ENCODE measurements at regions of chr4 and their contacts with region 1.

Region 1: DNA sequence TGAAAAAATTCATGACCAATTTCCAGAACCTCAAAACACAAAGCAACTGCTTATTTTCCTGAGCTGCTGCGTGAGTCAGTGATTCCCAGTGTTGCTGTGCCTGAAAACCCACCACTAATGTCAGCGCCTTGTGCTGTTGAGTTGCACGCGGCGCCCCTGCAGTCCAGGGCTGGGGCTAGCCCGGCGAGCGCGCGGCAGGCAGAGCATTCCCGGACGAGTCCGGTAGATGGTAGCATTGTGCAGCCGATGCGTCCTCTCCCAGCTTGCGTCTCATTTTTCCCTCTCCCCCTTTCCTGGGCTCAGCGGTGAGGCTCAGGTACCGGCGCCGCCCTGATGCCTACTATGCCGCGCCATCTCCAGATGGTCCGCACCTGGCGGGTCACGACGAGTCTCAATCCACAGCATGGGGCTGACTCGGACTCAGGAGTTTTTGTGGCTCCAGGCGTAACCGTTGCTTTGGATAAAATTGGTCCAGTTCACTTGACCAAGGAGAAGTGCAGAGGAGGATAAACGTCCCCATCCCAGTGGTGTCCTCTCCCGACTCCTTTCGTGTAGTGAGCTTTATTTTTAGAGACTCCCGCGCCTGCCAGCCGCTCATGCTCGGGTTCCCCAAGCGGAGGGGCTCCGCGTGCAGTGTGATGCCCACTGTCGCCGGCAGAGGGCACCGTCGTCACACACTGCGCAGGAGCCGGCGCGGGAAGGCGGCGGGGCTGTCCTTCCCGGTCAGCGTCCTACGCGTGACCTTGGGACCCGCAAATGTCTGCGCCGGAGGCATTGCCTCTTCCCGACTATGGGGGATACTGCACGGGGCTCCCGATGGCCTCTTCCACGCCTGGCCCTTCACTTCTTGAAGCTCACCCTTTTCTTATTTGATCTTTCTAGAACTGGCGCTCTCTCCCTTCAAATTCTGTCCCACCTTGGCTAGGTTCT is 53.6 kb upstream of the IGFBP7 start:
- DNase-seq: peak; percentile 83
- ATAC-seq: peak; percentile 99
- H3K4me3 ChIP-seq: peak overlapping the region; percentile 59
- H3K27ac ChIP-seq: peak overlapping the region; percentile 38
- H3K4me1 ChIP-seq: peaks cover under 1% of the 10 kb centered on the region; the same call in 1 of the 2 replicates
- H3K27me3 ChIP-seq: peaks cover 16% of the 10 kb centered on the region
- CTCF ChIP-seq: peak; percentile 90
- POLR2A ChIP-seq: peak; percentile 54; the same call in 1 of the 2 replicates
- RAD21 ChIP-seq: peak; percentile 89

Region 2: DNA sequence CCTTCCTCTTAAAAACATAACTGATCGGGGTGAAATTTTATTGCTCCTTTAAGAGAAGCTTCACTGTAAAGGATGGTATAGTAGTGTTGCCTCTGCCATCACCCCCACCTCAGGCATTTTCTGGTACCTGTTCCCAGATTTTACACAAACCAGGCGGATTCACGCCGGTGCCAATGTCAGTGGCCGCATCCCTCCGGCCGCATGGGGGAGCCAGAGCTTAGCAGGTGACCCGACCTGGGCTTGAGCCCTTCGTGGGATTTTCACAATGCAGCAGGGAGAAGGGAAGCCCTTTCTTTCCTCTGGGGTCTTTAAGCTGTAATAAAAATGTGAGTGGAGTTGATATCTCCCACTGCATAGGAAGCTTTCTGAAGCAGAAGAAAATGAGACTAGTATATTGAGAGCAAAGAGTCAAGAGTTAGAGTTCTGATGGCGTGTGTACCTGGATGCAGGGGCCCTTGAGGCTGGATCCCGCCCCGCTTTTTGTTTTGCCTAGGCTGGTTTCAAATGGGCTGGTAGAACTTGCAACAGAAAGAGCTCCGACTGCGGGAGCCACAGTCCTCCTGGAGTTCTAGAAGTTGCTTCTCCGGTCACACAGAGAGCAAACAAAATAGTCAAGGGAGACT is 125.7 kb before region 1 on chr4:
- CTCF ChIA-PET with region 1: interaction called, 9 read pairs
- POLR2A ChIA-PET with region 1: no interaction called
- dilution Hi-C with region 1: no loop called
- in situ Hi-C with region 1: no loop called
- intact Hi-C with region 1: loop called (anchors 1 kb)
- DNase-seq: peak; percentile 55
- ATAC-seq: peak; percentile 73
- H3K4me3 ChIP-seq: no peak overlapping the region
- H3K27ac ChIP-seq: no peak overlapping the region
- H3K4me1 ChIP-seq: peaks cover 8% of the 10 kb centered on the region
- H3K27me3 ChIP-seq: no peaks in the 10 kb centered on the region
- CTCF ChIP-seq: peak; percentile 86
- POLR2A ChIP-seq: peak; percentile 22; the same call in 1 of the 2 replicates
- RAD21 ChIP-seq: peak; percentile 94

Region 3: GRCh38 chr4:57043347-57044251 is 120.2 kb before region 1 on chr4:
- CTCF ChIA-PET with region 1: interaction called, 10 read pairs
- POLR2A ChIA-PET with region 1: no interaction called
- dilution Hi-C with region 1: no loop called
- in situ Hi-C with region 1: no loop called
- intact Hi-C with region 1: loop called (anchors 1 kb)
- DNase-seq: peak; percentile 54
- ATAC-seq: peak; percentile 53
- H3K4me3 ChIP-seq: no peak overlapping the region
- H3K27ac ChIP-seq: peak overlapping the region; percentile 90
- H3K4me1 ChIP-seq: peaks cover 23% of the 10 kb centered on the region
- H3K27me3 ChIP-seq: no peaks in the 10 kb centered on the region
- CTCF ChIP-seq: no peak
- POLR2A ChIP-seq: no peak
- RAD21 ChIP-seq: no peak

Region 4: DNA sequence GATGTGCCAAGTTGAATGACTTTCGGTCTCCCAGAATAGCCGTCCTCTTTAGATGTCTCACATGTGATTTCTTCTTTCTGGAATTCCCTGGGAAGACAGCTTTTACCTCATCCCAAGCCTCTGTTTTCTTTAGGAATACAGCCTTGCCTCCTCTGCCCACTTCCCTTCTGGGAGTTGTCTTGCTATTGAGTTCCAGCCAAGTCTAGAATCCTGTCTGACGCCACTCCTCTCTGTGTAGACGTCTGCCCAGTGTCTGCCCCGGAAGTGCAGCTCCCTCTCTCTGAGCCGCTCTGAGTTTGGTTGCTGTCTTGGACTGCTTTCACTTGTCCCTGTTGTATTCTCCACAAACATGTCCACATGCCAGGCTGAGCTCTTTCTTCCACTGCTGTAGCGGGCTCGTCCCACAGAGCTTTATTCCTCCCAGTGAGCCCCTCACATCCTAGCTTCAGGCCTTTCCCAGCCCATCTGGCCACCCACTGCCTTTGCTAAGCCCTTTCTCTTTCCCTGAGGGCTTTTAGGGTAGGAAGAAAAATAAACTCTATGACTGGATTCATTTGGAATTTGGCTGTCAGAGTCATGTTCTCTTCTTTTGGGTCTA is 44.6 kb before region 1 on chr4:
- CTCF ChIA-PET with region 1: interaction called, 11 read pairs
- POLR2A ChIA-PET with region 1: no interaction called
- dilution Hi-C with region 1: no loop called
- in situ Hi-C with region 1: no loop called
- intact Hi-C with region 1: loop called (anchors 2 kb)
- DNase-seq: peak; percentile 96
- ATAC-seq: peak; percentile 92
- H3K4me3 ChIP-seq: peak overlapping the region; percentile 33; the same call in 1 of the 2 replicates
- H3K27ac ChIP-seq: peak overlapping the region; percentile 78
- H3K4me1 ChIP-seq: peaks cover 11% of the 10 kb centered on the region
- H3K27me3 ChIP-seq: no peaks in the 10 kb centered on the region
- CTCF ChIP-seq: no peak
- POLR2A ChIP-seq: peak; percentile 79
- RAD21 ChIP-seq: no peak; the same call in 1 of the 2 replicates

Region 5: GRCh38 chr4:57147335-57148060 is 16.3 kb before region 1 on chr4:
- CTCF ChIA-PET with region 1: interaction called, 22 read pairs
- POLR2A ChIA-PET with region 1: interaction called, 3 read pairs
- dilution Hi-C with region 1: no loop called
- in situ Hi-C with region 1: no loop called
- intact Hi-C with region 1: no loop called
- DNase-seq: peak; percentile 75
- ATAC-seq: peak; percentile 37; the same call in 1 of the 2 replicates
- H3K4me3 ChIP-seq: no peak overlapping the region
- H3K27ac ChIP-seq: no peak overlapping the region
- H3K4me1 ChIP-seq: peaks cover 7% of the 10 kb centered on the region; the same call in 1 of the 2 replicates
- H3K27me3 ChIP-seq: no peaks in the 10 kb centered on the region
- CTCF ChIP-seq: no peak
- POLR2A ChIP-seq: no peak
- RAD21 ChIP-seq: no peak

Region 6: GRCh38 chr4:57426779-57427395 is 263.1 kb after region 1 on chr4:
- CTCF ChIA-PET with region 1: interaction called, 4 read pairs
- POLR2A ChIA-PET with region 1: no interaction called
- dilution Hi-C with region 1: no loop called
- in situ Hi-C with region 1: no loop called
- intact Hi-C with region 1: loop called (anchors 10 kb)
- DNase-seq: peak; percentile 66
- ATAC-seq: peak; percentile 77
- H3K4me3 ChIP-seq: no peak overlapping the region
- H3K27ac ChIP-seq: no peak overlapping the region
- H3K4me1 ChIP-seq: no peaks in the 10 kb centered on the region
- H3K27me3 ChIP-seq: no peaks in the 10 kb centered on the region
- CTCF ChIP-seq: peak; percentile 68
- POLR2A ChIP-seq: no peak
- RAD21 ChIP-seq: peak; percentile 67

Region 7: GRCh38 chr4:57661517-57662090 is 497.8 kb after region 1 on chr4:
- CTCF ChIA-PET with region 1: no interaction called
- POLR2A ChIA-PET with region 1: no interaction called
- dilution Hi-C with region 1: no loop called
- in situ Hi-C with region 1: no loop called
- intact Hi-C with region 1: no loop called
- DNase-seq: no peak
- ATAC-seq: no peak
- H3K4me3 ChIP-seq: no peak overlapping the region
- H3K27ac ChIP-seq: no peak overlapping the region
- H3K4me1 ChIP-seq: no peaks in the 10 kb centered on the region
- H3K27me3 ChIP-seq: no peaks in the 10 kb centered on the region
- CTCF ChIP-seq: no peak
- POLR2A ChIP-seq: no peak
- RAD21 ChIP-seq: no peak

Measured in IMR-90 (cell line).